ENCODE measurements at regions of chr9 and their contacts with region 1.

Region 1: GRCh38 chr9:15142878-15143534 is 164.0 kb downstream of the TTC39B start:
- DNase-seq: peak; percentile 12
- H3K4me3 Mint-ChIP-seq: no peak overlapping the region
- H3K27ac Mint-ChIP-seq: no peak overlapping the region
- H3K4me1 Mint-ChIP-seq: no peaks in the 10 kb centered on the region
- H3K27me3 Mint-ChIP-seq: peaks cover 1% of the 10 kb centered on the region

Region 2: GRCh38 chr9:14706530-14707140 is 436.4 kb before region 1 on chr9:
- CTCF ChIA-PET with region 1: no interaction called
- POLR2A ChIA-PET with region 1: no interaction called
- intact Hi-C with region 1: no loop called
- DNase-seq: no peak
- H3K4me3 Mint-ChIP-seq: no peak overlapping the region
- H3K27ac Mint-ChIP-seq: no peak overlapping the region
- H3K4me1 Mint-ChIP-seq: no peaks in the 10 kb centered on the region
- H3K27me3 Mint-ChIP-seq: peaks cover 17% of the 10 kb centered on the region

Region 3: GRCh38 chr9:14846871-14847311 is 296.1 kb before region 1 on chr9:
- CTCF ChIA-PET with region 1: no interaction called
- POLR2A ChIA-PET with region 1: no interaction called
- intact Hi-C with region 1: loop called (anchors 5 kb)
- DNase-seq: peak; percentile 67
- H3K4me3 Mint-ChIP-seq: no peak overlapping the region
- H3K27ac Mint-ChIP-seq: no peak overlapping the region
- H3K4me1 Mint-ChIP-seq: no peaks in the 10 kb centered on the region
- H3K27me3 Mint-ChIP-seq: peaks cover 3% of the 10 kb centered on the region

Region 4: DNA sequence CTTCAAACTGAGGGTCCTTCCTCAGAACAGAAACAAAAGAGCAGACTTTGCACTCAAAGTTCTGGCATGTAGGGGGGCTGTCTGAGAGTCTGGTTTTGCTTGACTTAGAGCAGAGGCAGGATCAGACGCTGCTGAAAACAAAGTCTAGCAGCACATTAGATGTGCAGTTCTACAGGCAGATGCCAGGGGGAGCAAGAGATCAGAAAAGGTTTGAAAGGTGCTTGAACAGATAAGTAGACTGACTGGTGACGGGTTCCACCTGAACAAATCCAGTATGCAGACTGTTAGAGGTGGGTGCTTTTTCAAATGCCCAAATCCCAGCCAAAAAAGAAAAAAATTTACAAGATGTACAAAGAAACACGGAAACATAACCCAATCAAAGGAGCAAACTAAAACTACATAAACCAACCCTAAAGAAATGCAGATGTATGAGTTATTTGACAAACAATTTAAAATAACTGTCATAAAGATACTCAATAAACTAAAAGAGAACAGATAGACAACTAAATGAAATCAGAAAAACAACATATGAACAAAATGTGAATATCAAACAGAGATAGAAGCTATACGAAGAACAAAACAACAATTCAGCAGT is 38.1 kb before region 1 on chr9:
- CTCF ChIA-PET with region 1: interaction called, 121 read pairs
- POLR2A ChIA-PET with region 1: no interaction called
- intact Hi-C with region 1: loop called (anchors 2 kb)
- DNase-seq: peak; percentile 34
- H3K4me3 Mint-ChIP-seq: no peak overlapping the region
- H3K27ac Mint-ChIP-seq: no peak overlapping the region
- H3K4me1 Mint-ChIP-seq: no peaks in the 10 kb centered on the region
- H3K27me3 Mint-ChIP-seq: peaks cover 11% of the 10 kb centered on the region

Region 5: DNA sequence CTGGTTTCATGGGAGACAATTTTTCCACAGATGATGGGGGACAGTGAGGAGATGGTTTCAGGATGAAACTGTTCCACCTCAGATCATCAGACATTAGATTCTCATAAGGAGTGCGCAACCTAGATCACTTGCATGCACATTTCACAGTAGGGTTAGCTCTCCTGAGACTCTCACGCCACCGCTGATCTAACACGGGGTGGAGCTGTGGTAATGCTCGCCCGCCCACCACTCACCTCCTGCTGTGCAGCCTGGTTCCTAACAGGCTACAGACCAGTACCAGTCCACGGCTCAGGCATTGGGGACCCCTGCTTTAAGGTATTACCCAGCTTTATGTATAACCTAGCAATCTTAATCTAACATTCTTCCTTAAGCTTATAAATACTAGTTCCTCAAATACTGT is 128.4 kb after region 1 on chr9:
- CTCF ChIA-PET with region 1: no interaction called
- POLR2A ChIA-PET with region 1: no interaction called
- intact Hi-C with region 1: no loop called
- DNase-seq: peak; percentile 49
- H3K4me3 Mint-ChIP-seq: no peak overlapping the region
- H3K27ac Mint-ChIP-seq: no peak overlapping the region
- H3K4me1 Mint-ChIP-seq: peaks cover 35% of the 10 kb centered on the region
- H3K27me3 Mint-ChIP-seq: no peaks in the 10 kb centered on the region

Measured in activated CD4-positive, alpha-beta memory T cell treated with anti-CD3 and anti-CD28 coated beads for 36 hours (primary cell).